ENCODE measurements at regions of chr20 and their contacts with region 1.

Region 1: GRCh38 chr20:2387180-2387577 is 6.5 kb downstream of the TGM6 start:
- DNase-seq: peak; percentile 73
- ATAC-seq: peak; percentile 85
- H3K4me3 Mint-ChIP-seq: no peak overlapping the region
- H3K27ac Mint-ChIP-seq: no peak overlapping the region; the same call in 1 of the 2 replicates
- H3K4me1 Mint-ChIP-seq: no peaks in the 10 kb centered on the region
- H3K27me3 Mint-ChIP-seq: no peaks in the 10 kb centered on the region; the same call in 1 of the 2 replicates
- CTCF ChIP-seq: peak; percentile 50

Region 2: GRCh38 chr20:2357114-2357513 is 30.1 kb before region 1 on chr20:
- CTCF ChIA-PET with region 1: interaction called, 11 read pairs
- POLR2A ChIA-PET with region 1: no interaction called
- DNase-seq: no peak
- ATAC-seq: no peak
- H3K4me3 Mint-ChIP-seq: no peak overlapping the region
- H3K27ac Mint-ChIP-seq: no peak overlapping the region
- H3K4me1 Mint-ChIP-seq: peaks cover 12% of the 10 kb centered on the region
- H3K27me3 Mint-ChIP-seq: no peaks in the 10 kb centered on the region; the same call in 1 of the 2 replicates
- CTCF ChIP-seq: no peak

Region 3: GRCh38 chr20:2365666-2366065 is 21.5 kb before region 1 on chr20:
- CTCF ChIA-PET with region 1: interaction called, 13 read pairs
- POLR2A ChIA-PET with region 1: no interaction called
- DNase-seq: no peak
- ATAC-seq: no peak
- H3K4me3 Mint-ChIP-seq: no peak overlapping the region
- H3K27ac Mint-ChIP-seq: no peak overlapping the region
- H3K4me1 Mint-ChIP-seq: peaks cover 6% of the 10 kb centered on the region; the same call in 1 of the 2 replicates
- H3K27me3 Mint-ChIP-seq: no peaks in the 10 kb centered on the region
- CTCF ChIP-seq: no peak

Region 4: GRCh38 chr20:2397595-2398145 is 10.5 kb after region 1 on chr20:
- CTCF ChIA-PET with region 1: interaction called, 24 read pairs
- POLR2A ChIA-PET with region 1: no interaction called
- DNase-seq: peak; percentile 32
- ATAC-seq: peak; percentile 89
- H3K4me3 Mint-ChIP-seq: no peak overlapping the region
- H3K27ac Mint-ChIP-seq: no peak overlapping the region
- H3K4me1 Mint-ChIP-seq: 0 out of 2 replicates have a peak, but pooled peaks cover 3% of the 10 kb centered on the region
- H3K27me3 Mint-ChIP-seq: no peaks in the 10 kb centered on the region; the same call in 1 of the 2 replicates
- CTCF ChIP-seq: peak; percentile 25; the same call in 1 of the 2 replicates

Region 5: GRCh38 chr20:2451939-2452732 is 65.0 kb after region 1 on chr20:
- CTCF ChIA-PET with region 1: interaction called, 31 read pairs
- POLR2A ChIA-PET with region 1: no interaction called
- DNase-seq: peak; percentile 91
- ATAC-seq: peak; percentile 86
- H3K4me3 Mint-ChIP-seq: no peak overlapping the region
- H3K27ac Mint-ChIP-seq: no peak overlapping the region
- H3K4me1 Mint-ChIP-seq: no peaks in the 10 kb centered on the region
- H3K27me3 Mint-ChIP-seq: no peaks in the 10 kb centered on the region
- CTCF ChIP-seq: peak; percentile 78

Region 6: GRCh38 chr20:2476742-2477615 is 89.8 kb after region 1 on chr20:
- CTCF ChIA-PET with region 1: interaction called, 15 read pairs
- POLR2A ChIA-PET with region 1: no interaction called
- DNase-seq: no peak
- ATAC-seq: peak; percentile 92
- H3K4me3 Mint-ChIP-seq: no peak overlapping the region
- H3K27ac Mint-ChIP-seq: 0 out of 2 replicates have a peak overlapping the region, but pooled peaks have one; percentile 2
- H3K4me1 Mint-ChIP-seq: peaks cover 23% of the 10 kb centered on the region
- H3K27me3 Mint-ChIP-seq: no peaks in the 10 kb centered on the region
- CTCF ChIP-seq: no peak